Activated T-helper 1 cell treated with anti-CD3 and anti-CD28 coated beads, Interleukin-12 subunit alpha, Interleukin-12 subunit beta, Interleukin-2, Interleukin-4 antibody, amounts not matched to agents 30 ng/mL and 10 ng/mL and 1 ng/mL, durations not matched to agents 14 hours and 24 hours and 36 hours (primary cell): ENCODE measurements at regions of chr2 and their contacts with region 1.

Region 1: DNA sequence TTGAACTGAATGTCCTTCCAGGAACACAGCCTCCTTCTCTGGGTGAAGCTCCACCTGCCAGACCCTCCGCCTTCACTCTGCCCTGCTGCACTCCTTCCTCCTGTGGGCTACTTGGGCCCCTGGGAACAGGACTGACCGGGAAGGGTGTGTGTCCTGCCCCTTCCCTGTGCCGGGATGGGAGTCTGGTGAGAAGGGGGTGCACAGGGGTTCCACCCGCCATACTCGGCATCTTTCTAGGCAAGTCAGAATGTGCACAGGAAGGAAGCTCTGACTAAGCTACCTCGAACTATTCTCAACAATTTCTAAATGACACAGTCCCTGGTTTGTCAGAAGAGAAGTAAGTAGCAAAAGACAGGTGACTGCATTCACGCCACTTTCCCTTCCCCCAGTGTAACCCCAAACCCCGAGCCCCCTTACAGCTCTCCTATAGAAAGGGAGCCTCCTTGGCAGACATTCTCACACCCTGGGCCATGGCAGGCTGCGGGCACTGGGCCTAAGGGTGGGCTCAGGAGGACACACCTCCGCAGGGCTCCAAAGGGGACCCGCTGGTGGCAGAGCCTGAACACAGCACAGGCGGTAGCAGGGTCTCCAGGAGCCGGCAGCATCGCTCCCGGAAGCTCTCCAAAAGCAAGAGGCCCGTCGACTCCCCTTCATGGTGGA is 184.1 kb downstream of the HDAC4 start:
- DNase-seq: peak; percentile 34
- H3K4me3 Mint-ChIP-seq: peak overlapping the region; percentile 76
- H3K27ac Mint-ChIP-seq: peak overlapping the region; percentile 69
- H3K4me1 Mint-ChIP-seq: peaks cover 51% of the 10 kb centered on the region
- H3K27me3 Mint-ChIP-seq: no peaks in the 10 kb centered on the region

Region 2: GRCh38 chr2:238320246-238320647 is 896.5 kb before region 1 on chr2 and contains the start of gene TRAF3IP1:
- intact Hi-C with region 1: no loop called
- DNase-seq: peak; percentile 84
- H3K4me3 Mint-ChIP-seq: peak within 1 kb of the TSS; percentile 81
- H3K27ac Mint-ChIP-seq: peak within 1 kb of the TSS; percentile 8
- H3K4me1 Mint-ChIP-seq: peaks cover 15% of the 10 kb centered on the region
- H3K27me3 Mint-ChIP-seq: peaks cover 21% of the 10 kb centered on the region
- total RNA-seq, gene TRAF3IP1: 14.4 and 15.4 TPM in 2 replicates

Region 3: GRCh38 chr2:239169311-239170048 is 47.3 kb before region 1 on chr2:
- intact Hi-C with region 1: loop called (anchors 2 kb)
- DNase-seq: no peak
- H3K4me3 Mint-ChIP-seq: no peak overlapping the region
- H3K27ac Mint-ChIP-seq: no peak overlapping the region
- H3K4me1 Mint-ChIP-seq: peaks cover 39% of the 10 kb centered on the region
- H3K27me3 Mint-ChIP-seq: no peaks in the 10 kb centered on the region

Region 4: GRCh38 chr2:239199041-239199768 is 17.5 kb before region 1 on chr2:
- intact Hi-C with region 1: no loop called
- DNase-seq: no peak
- H3K4me3 Mint-ChIP-seq: no peak overlapping the region
- H3K27ac Mint-ChIP-seq: no peak overlapping the region
- H3K4me1 Mint-ChIP-seq: no peaks in the 10 kb centered on the region
- H3K27me3 Mint-ChIP-seq: no peaks in the 10 kb centered on the region

Region 5: GRCh38 chr2:239230318-239231052 is 13.7 kb after region 1 on chr2:
- intact Hi-C with region 1: loop called (anchors 2 kb)
- DNase-seq: peak; percentile 5
- H3K4me3 Mint-ChIP-seq: peak overlapping the region; percentile 45
- H3K27ac Mint-ChIP-seq: peak overlapping the region; percentile 79
- H3K4me1 Mint-ChIP-seq: peaks cover 48% of the 10 kb centered on the region
- H3K27me3 Mint-ChIP-seq: peaks cover 3% of the 10 kb centered on the region

Region 6: DNA sequence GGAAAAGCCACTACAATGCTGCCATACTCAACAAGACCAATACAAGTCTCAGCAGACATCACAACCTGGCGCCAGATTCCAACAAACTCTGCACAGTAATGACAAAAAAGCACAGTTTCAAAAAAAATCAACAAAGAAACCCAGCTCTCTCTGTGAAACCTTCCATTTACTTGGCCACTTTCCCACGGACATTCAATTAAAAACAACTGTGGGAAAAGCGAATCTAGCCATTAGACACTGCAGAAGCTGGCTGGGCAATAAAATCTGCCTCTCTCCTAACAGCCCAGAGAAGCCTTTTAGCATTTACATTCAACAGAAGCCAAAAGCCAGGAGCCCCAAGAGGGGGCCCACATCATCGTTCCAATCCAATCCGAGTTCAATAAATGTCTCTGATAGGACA is 55.1 kb after region 1 on chr2:
- intact Hi-C with region 1: no loop called
- DNase-seq: no peak
- H3K4me3 Mint-ChIP-seq: no peak overlapping the region
- H3K27ac Mint-ChIP-seq: no peak overlapping the region
- H3K4me1 Mint-ChIP-seq: peaks cover 92% of the 10 kb centered on the region
- H3K27me3 Mint-ChIP-seq: peaks cover 12% of the 10 kb centered on the region

Region 7: GRCh38 chr2:239288951-239289511 is 72.3 kb after region 1 on chr2:
- intact Hi-C with region 1: loop called (anchors 1 kb)
- DNase-seq: peak; percentile 61
- H3K4me3 Mint-ChIP-seq: peak overlapping the region; percentile 77
- H3K27ac Mint-ChIP-seq: peak overlapping the region; percentile 98
- H3K4me1 Mint-ChIP-seq: peaks cover 78% of the 10 kb centered on the region
- H3K27me3 Mint-ChIP-seq: peaks cover 7% of the 10 kb centered on the region

Region 8: GRCh38 chr2:239380831-239381708 is 164.3 kb after region 1 on chr2:
- intact Hi-C with region 1: loop called (anchors 2 kb)
- DNase-seq: peak; percentile 64
- H3K4me3 Mint-ChIP-seq: peak overlapping the region; percentile 83
- H3K27ac Mint-ChIP-seq: peak overlapping the region; percentile 94
- H3K4me1 Mint-ChIP-seq: peaks cover 38% of the 10 kb centered on the region
- H3K27me3 Mint-ChIP-seq: peaks cover 2% of the 10 kb centered on the region